Right cardiac atrium (tissue), 5 donors: ENCODE measurements at regions of chr22 and their contacts with region 1.

Region 1: DNA sequence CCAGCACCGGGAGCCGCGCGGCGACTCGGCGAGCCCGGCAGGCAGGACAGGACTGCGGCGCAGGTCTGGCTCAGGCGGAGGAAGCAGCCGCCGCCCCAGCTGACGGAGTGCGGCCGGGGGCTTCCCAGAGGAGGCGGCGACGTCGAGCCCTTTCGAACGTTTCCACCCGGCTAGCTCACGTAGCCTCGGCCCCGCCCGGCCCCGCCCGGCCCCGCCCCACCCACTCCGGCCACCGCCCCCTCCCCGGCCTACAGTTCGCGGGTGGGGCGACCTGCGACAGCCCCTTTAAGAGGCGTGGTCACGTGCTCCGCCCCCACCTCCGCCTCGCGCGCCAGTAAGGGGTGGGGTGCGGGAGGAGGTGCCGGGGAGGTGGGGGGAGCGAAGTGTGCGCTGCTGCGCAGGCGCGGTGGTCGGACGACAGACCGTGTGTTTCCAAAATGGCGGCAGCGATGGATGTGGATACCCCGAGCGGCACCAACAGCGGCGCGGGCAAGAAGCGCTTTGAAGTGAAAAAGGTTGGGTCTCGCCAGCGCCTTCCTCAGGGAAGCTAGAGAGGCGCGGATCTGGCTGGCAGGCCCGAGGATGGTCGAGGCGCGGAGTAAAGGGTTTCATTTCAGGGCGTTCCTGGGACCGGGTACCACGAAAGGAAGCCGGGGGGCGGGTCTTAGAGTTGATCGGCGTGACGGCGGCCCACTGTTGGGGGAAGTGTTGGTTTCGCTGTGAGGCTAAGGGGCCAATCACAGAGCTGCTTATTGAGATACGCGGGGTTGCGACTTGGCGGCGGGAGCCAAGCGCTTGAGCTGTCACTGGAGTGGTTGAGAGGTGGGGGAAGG is at the start of gene RBX1:
- DNase-seq: peak; percentile 98 to 99 (median 99)
- ATAC-seq: peak; percentile 97
- H3K4me3 ChIP-seq: peak within 1 kb of the TSS; percentile 44
- H3K27ac ChIP-seq: peak within 1 kb of the TSS; percentile 95
- H3K4me1 ChIP-seq: no peaks in the 10 kb centered on the region
- H3K27me3 ChIP-seq: no peaks in the 10 kb centered on the region
- total RNA-seq, gene RBX1: 52.6 to 65.6 (median 58.2) TPM

Region 2: GRCh38 chr22:41022470-41023298 is 71.5 kb after region 1 on chr22:
- intact Hi-C with region 1: loop called in 1 of 4 experiments (anchors 2 kb)
- DNase-seq: peak; percentile 94 to 98 (median 97)
- ATAC-seq: peak; percentile 96
- H3K4me3 ChIP-seq: peak overlapping the region; percentile 90
- H3K27ac ChIP-seq: peak overlapping the region; percentile 94
- H3K4me1 ChIP-seq: no peaks in the 10 kb centered on the region
- H3K27me3 ChIP-seq: no peaks in the 10 kb centered on the region

Region 3: GRCh38 chr22:41091132-41092022 is 140.2 kb after region 1 on chr22:
- intact Hi-C with region 1: loop called (anchors 1 to 10 kb)
- DNase-seq: peak; percentile 100
- ATAC-seq: peak; percentile 98
- H3K4me3 ChIP-seq: peak overlapping the region; percentile 92
- H3K27ac ChIP-seq: peak overlapping the region; percentile 91
- H3K4me1 ChIP-seq: no peaks in the 10 kb centered on the region
- H3K27me3 ChIP-seq: no peaks in the 10 kb centered on the region